PC-3 (cell line): ENCODE measurements at regions of chr5 and their contacts with region 1.

Region 1: GRCh38 chr5:96962540-96962991 is 26.7 kb downstream of the LNPEP start:
- DNase-seq: no peak
- ATAC-seq: no peak
- H3K4me3 ChIP-seq: no peak overlapping the region
- H3K27ac ChIP-seq: no peak overlapping the region
- H3K4me1 ChIP-seq: peaks cover 2% of the 10 kb centered on the region; the same call in 1 of the 2 replicates
- H3K27me3 ChIP-seq: no peaks in the 10 kb centered on the region
- CTCF ChIP-seq: no peak

Region 2: DNA sequence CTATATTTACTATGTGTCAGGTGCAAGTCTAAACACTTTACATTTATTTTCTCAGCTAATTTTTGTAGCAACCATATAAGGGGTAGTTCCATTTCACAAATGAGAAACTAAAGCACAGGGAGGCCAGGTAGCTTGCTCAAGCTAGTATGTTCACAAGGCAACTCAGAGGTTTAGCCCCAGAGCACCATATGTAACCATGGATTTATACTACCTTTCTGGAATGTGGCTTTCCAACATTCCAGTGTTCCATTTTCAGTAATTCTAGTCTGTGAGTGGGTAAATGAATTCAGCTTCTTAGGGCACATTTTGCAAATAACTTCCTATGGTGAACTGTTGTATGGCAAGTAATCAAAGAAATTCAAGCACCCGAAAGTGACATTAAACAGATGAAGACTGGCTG is 325.4 kb before region 1 on chr5:
- CTCF ChIA-PET with region 1: no interaction called
- POLR2A ChIA-PET with region 1: interaction called, 16 read pairs
- intact Hi-C with region 1: no loop called
- DNase-seq: peak; percentile 32
- ATAC-seq: no peak
- H3K4me3 ChIP-seq: no peak overlapping the region
- H3K27ac ChIP-seq: no peak overlapping the region
- H3K4me1 ChIP-seq: no peaks in the 10 kb centered on the region
- H3K27me3 ChIP-seq: no peaks in the 10 kb centered on the region
- CTCF ChIP-seq: no peak